Activated T-helper 1 cell treated with anti-CD3 and anti-CD28 coated beads, Interleukin-12 subunit alpha, Interleukin-12 subunit beta, Interleukin-2, Interleukin-4 antibody, amounts not matched to agents 30 ng/mL and 10 ng/mL and 1 ng/mL, durations not matched to agents 14 hours and 24 hours and 36 hours (primary cell): ENCODE measurements at regions of chr2 and their contacts with region 1.

Region 1: DNA sequence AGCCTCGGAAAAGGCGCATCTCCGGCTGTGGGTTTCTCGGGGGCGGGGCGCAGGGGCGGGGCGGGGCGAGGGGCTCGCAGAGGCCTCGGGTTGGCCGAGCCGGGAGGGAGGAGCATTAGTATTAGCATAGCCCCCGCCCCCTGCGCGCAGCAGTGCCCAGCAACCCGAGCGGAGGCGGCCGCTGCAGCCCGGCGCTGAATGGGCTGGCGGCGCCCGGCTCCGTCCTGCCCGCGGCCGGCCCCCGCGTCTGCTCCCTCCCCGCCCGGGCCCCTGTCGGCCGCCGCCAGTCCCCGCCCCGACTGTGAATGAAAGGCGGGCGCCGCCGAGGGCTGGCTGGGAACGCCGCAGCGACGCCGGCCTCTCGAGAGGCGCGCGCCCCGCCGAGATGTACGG is at the start of gene EFR3B:
- DNase-seq: peak; percentile 83
- H3K4me3 Mint-ChIP-seq: peak within 1 kb of the TSS; percentile 81
- H3K27ac Mint-ChIP-seq: no peak within 1 kb of the TSS
- H3K4me1 Mint-ChIP-seq: peaks cover 26% of the 10 kb centered on the region
- H3K27me3 Mint-ChIP-seq: peaks cover 49% of the 10 kb centered on the region
- total RNA-seq, gene EFR3B: 0.21 and 0.22 TPM in 2 replicates

Region 2: DNA sequence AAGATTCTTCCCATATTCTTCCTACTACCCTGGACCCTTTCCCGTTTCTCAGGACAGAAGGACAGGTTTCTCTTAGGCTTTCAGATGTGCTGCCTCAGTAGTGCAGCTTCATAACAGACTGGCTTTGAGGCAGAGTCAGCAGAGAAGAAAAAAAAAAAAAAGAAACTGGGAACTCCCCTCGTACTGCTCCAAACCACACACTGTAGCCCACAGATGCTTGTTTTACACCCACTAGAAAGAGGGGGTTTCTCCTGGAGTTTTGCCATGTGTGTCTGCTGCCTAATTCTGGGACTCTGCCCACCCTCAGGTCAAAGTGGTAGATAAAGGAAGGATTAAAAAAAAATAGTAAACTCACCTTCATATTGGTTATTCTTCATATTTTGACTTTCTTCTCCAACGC is 455.0 kb before region 1 on chr2:
- intact Hi-C with region 1: loop called (anchors 2 kb)
- DNase-seq: peak; percentile 18
- H3K4me3 Mint-ChIP-seq: peak overlapping the region; percentile 19
- H3K27ac Mint-ChIP-seq: peak overlapping the region; percentile 72
- H3K4me1 Mint-ChIP-seq: peaks cover 51% of the 10 kb centered on the region
- H3K27me3 Mint-ChIP-seq: no peaks in the 10 kb centered on the region

Region 3: DNA sequence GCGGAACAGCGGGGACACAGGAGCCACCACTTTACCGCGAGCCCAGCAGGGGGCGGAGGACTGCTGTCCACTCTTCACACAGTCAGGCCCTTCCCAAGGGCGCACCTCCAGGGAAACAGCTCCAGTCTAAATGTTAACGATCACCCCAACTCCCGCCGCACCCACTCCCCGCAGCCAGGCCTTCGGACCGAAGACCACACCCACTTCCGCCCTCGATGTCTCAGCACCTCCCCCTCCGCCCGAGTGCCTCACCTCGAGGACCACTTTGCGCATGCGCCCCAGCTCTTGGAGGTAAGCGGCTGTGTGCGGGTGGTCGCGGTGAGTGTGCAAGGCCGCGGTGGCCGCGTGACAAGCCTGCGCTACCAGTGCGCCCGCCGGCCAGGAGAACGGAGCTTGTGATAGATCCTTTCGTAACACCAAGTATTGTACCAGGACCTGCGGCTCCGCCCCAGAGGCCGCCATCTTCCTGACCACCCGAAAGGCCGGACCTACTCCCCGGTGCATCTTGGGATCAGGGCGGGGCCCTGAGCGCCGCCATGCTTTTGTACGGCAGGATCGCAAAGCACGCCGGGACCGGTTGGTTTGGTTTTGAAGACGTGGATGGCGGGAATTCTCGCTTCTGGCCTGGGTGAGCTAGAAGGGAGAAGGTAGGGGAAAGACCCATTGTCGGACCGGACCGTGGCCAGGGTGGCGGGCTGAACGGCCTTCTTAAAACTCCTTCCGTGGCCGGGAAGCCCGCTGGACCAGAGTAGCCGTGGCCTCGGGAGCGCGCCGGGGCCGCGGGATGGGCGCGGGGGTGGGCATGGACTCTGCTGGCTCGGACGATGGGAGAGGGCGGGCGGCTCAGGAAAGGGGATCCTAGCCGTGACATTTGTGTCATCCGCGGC is 248.8 kb before region 1 on chr2 and contains the starts of genes CENPO and PTRHD1:
- intact Hi-C with region 1: loop called (anchors 2 kb)
- DNase-seq: peak; percentile 92
- H3K4me3 Mint-ChIP-seq: peak within 1 kb of the TSS; percentile 95
- H3K27ac Mint-ChIP-seq: peak within 1 kb of the TSS; percentile 99
- H3K4me1 Mint-ChIP-seq: peaks cover 47% of the 10 kb centered on the region
- H3K27me3 Mint-ChIP-seq: peaks cover 1% of the 10 kb centered on the region
- total RNA-seq, gene CENPO: 44.7 and 48.3 TPM in 2 replicates
- total RNA-seq, gene PTRHD1: 16.5 and 17.3 TPM in 2 replicates

Region 4: GRCh38 chr2:24920098-24920808 is 121.7 kb before region 1 on chr2 and contains the start of gene ADCY3:
- intact Hi-C with region 1: loop called (anchors 1 kb)
- DNase-seq: peak; percentile 49
- H3K4me3 Mint-ChIP-seq: peak within 1 kb of the TSS; percentile 93
- H3K27ac Mint-ChIP-seq: peak within 1 kb of the TSS; percentile 90
- H3K4me1 Mint-ChIP-seq: peaks cover 32% of the 10 kb centered on the region
- H3K27me3 Mint-ChIP-seq: peaks cover 2% of the 10 kb centered on the region
- total RNA-seq, gene ADCY3: 101 and 108 TPM in 2 replicates

Region 5: GRCh38 chr2:25131567-25132298 is 89.8 kb after region 1 on chr2:
- intact Hi-C with region 1: loop called (anchors 2 kb)
- DNase-seq: no peak
- H3K4me3 Mint-ChIP-seq: peak overlapping the region; percentile 68
- H3K27ac Mint-ChIP-seq: no peak overlapping the region
- H3K4me1 Mint-ChIP-seq: peaks cover 10% of the 10 kb centered on the region
- H3K27me3 Mint-ChIP-seq: peaks cover 44% of the 10 kb centered on the region